Vagina (tissue), 2 donors: ENCODE measurements at regions of chr4 and their contacts with region 1.

Region 1: GRCh38 chr4:145602129-145602760 is 16.9 kb upstream of the MMAA start:
- DNase-seq: no peak
- H3K4me3 ChIP-seq: no peak overlapping the region
- H3K27ac ChIP-seq: no peak overlapping the region
- H3K4me1 ChIP-seq: no peaks in the 10 kb centered on the region
- H3K27me3 ChIP-seq: no peaks in the 10 kb centered on the region
- CTCF ChIP-seq: no peak
- POLR2A ChIP-seq: no peak

Region 2: GRCh38 chr4:145501051-145501660 is 101.1 kb before region 1 on chr4:
- intact Hi-C with region 1: loop called (anchors 2 kb)
- DNase-seq: no peak
- H3K4me3 ChIP-seq: no peak overlapping the region
- H3K27ac ChIP-seq: no peak overlapping the region
- H3K4me1 ChIP-seq: peaks cover 18% of the 10 kb centered on the region
- H3K27me3 ChIP-seq: no peaks in the 10 kb centered on the region
- CTCF ChIP-seq: no peak
- POLR2A ChIP-seq: no peak